Right ventricle myocardium inferior (tissue), 1 donor: ENCODE measurements at regions of chr10 and their contacts with region 1.

Region 1: DNA sequence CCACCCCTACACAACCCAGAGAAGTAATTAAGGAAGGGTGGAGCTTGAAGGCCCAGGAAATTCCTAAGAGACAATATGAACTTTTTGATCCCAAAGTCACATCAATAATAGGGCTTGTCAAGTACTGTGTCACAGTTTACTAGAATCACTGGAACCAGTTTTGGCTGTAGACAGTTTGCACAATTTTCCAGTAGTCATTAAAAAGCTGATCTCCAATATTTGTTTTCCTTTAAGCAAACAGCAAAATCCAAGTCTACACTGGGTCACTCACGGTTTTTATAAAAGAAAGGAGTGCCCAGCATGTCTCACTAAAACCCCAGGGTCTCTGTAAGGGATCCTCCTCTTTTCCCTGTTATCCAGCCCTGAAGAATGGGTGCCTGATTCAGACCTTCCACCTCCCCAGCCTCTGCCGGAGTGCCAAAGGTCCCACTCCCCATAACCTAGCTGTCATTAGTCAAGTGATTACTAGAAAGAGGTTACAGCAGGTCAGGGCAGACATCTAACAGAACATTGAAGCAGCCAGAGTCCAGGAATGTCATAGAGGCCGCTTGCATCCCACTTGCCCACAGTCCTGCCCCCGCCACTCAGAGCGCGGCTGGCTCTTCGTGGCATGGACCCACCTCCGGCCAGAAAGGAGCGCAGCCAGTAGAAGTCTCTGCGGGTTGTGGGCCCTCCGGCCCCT is 556 bp downstream of the SLC25A16 start:
- DNase-seq: no peak
- ATAC-seq: peak; percentile 64

Region 2: GRCh38 chr10:68720793-68721672 is 194.3 kb after region 1 on chr10 and contains the start of gene CCAR1:
- intact Hi-C with region 1: loop called (anchors 5 kb)
- DNase-seq: peak; percentile 99
- ATAC-seq: peak; percentile 99
- total RNA-seq, gene CCAR1: 32.0 TPM

Region 3: DNA sequence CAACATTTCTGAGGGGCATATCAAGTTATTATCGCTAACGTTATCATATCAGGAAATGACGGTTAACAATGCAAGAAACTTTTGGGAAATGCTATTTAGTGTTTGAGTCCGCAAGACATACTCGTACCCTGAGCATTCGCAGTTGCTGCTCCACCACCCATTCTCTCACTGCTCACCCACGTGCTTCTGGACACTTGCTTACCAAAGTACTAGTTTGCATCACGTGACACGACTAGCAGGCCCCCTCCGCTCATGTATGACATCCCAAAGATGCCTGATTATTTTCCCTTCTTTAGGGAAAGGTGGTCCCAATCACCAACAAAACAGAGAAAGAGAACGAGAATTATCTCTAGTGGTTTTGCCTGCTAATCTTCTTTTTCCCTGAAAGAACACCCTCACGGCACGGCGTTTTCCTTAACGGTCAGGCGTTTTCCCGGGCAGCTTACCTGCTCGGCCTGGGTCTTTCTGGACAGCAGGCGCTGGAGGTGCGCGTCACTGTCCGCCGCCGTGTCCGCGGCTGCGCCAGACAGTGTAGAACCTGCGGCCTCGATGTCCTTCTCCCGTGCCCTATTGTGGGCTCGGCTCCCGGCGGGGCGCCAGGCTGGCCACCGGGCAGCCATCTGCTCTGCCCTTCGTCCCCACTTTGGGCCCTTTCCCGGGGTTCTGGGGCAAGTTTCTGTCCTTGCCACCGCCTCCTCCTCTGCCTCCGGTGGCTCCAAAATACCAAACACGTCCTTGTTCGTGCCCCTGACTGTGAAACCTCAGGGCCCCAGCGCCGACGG is 653.2 kb after region 1 on chr10 and contains the start of gene SUPV3L1:
- intact Hi-C with region 1: loop called (anchors 10 kb)
- DNase-seq: peak; percentile 96
- ATAC-seq: peak; percentile 97
- total RNA-seq, gene SUPV3L1: 40.1 TPM